Left cardiac atrium (tissue), 4 donors: ENCODE measurements at regions of chr13 and their contacts with region 1.

Region 1: GRCh38 chr13:91133941-91134802 is 213.3 kb upstream of the MIR17HG start:
- DNase-seq: no peak
- ATAC-seq: peak; percentile 74 to 93

Region 2: GRCh38 chr13:90732049-90732448 is 402.1 kb before region 1 on chr13:
- intact Hi-C with region 1: no loop called
- DNase-seq: no peak
- ATAC-seq: no peak

Region 3: GRCh38 chr13:91185294-91185863 is 51.2 kb after region 1 on chr13:
- intact Hi-C with region 1: loop called (anchors 2 to 10 kb)
- DNase-seq: no peak
- ATAC-seq: peak in 1 of 2 donors; percentile 26